Activated B cell treated with CpG ODN at 0.5 μM for 24 hours (primary cell): ENCODE measurements at regions of chr1 and their contacts with region 1.

Region 1: DNA sequence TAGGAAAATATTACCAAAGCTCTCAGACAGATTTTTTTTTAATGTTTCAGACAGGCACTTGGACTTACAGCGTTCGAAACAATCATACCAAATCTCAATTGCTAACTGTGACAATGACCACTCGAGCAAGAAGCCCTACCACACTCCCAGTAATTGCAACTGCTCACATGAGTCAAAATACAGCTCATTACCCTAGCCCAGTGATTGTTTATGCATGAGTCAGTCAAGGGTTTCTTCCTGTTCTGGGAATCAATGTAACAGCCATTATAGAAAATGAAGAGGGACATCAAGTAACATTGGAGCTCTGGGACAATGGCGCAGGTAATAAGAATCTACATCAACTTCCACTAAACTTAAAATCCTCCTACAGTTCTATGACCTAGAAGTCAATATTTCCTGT is 56.1 kb upstream of the SH3GLB1 start:
- DNase-seq: no peak
- ATAC-seq: peak; percentile 74
- H3K4me3 Mint-ChIP-seq: no peak overlapping the region
- H3K27ac Mint-ChIP-seq: no peak overlapping the region
- H3K4me1 Mint-ChIP-seq: peaks cover 10% of the 10 kb centered on the region
- H3K27me3 Mint-ChIP-seq: no peaks in the 10 kb centered on the region
- CTCF ChIP-seq: no peak

Region 2: GRCh38 chr1:86470859-86471258 is 177.4 kb before region 1 on chr1:
- CTCF ChIA-PET with region 1: interaction called, 5 read pairs
- POLR2A ChIA-PET with region 1: no interaction called
- intact Hi-C with region 1: loop called (anchors 1 kb)
- DNase-seq: no peak
- ATAC-seq: peak; percentile 56
- H3K4me3 Mint-ChIP-seq: no peak overlapping the region
- H3K27ac Mint-ChIP-seq: peak overlapping the region; percentile 6
- H3K4me1 Mint-ChIP-seq: peaks cover 6% of the 10 kb centered on the region
- H3K27me3 Mint-ChIP-seq: peaks cover 18% of the 10 kb centered on the region
- CTCF ChIP-seq: no peak

Region 3: GRCh38 chr1:86582161-86582560 is 66.1 kb before region 1 on chr1:
- CTCF ChIA-PET with region 1: no interaction called
- POLR2A ChIA-PET with region 1: no interaction called
- intact Hi-C with region 1: loop called (anchors 5 kb)
- DNase-seq: no peak
- ATAC-seq: no peak
- H3K4me3 Mint-ChIP-seq: no peak overlapping the region
- H3K27ac Mint-ChIP-seq: no peak overlapping the region
- H3K4me1 Mint-ChIP-seq: no peaks in the 10 kb centered on the region
- H3K27me3 Mint-ChIP-seq: no peaks in the 10 kb centered on the region
- CTCF ChIP-seq: no peak

Region 4: GRCh38 chr1:87735750-87736149 is 1087.5 kb after region 1 on chr1:
- CTCF ChIA-PET with region 1: no interaction called
- POLR2A ChIA-PET with region 1: no interaction called
- intact Hi-C with region 1: no loop called
- DNase-seq: no peak
- ATAC-seq: no peak
- H3K4me3 Mint-ChIP-seq: no peak overlapping the region
- H3K27ac Mint-ChIP-seq: no peak overlapping the region
- H3K4me1 Mint-ChIP-seq: no peaks in the 10 kb centered on the region
- H3K27me3 Mint-ChIP-seq: no peaks in the 10 kb centered on the region
- CTCF ChIP-seq: no peak